BJ (cell line): ENCODE measurements at regions of chr2 and their contacts with region 1.

Region 1: GRCh38 chr2:69724540-69725159 is 17.3 kb upstream of the ANXA4 start:
- DNase-seq: no peak
- H3K4me3 ChIP-seq: peak overlapping the region; percentile 23; the same call in 1 of the 2 replicates
- H3K27me3 ChIP-seq: no peaks in the 10 kb centered on the region
- CTCF ChIP-seq: peak; percentile 87

Region 2: GRCh38 chr2:69565431-69565839 is 159.2 kb before region 1 on chr2:
- CTCF ChIA-PET with region 1: interaction called, 10 read pairs
- POLR2A ChIA-PET with region 1: no interaction called
- DNase-seq: no peak
- H3K4me3 ChIP-seq: no peak overlapping the region
- H3K27me3 ChIP-seq: no peaks in the 10 kb centered on the region
- CTCF ChIP-seq: peak; percentile 57

Region 3: DNA sequence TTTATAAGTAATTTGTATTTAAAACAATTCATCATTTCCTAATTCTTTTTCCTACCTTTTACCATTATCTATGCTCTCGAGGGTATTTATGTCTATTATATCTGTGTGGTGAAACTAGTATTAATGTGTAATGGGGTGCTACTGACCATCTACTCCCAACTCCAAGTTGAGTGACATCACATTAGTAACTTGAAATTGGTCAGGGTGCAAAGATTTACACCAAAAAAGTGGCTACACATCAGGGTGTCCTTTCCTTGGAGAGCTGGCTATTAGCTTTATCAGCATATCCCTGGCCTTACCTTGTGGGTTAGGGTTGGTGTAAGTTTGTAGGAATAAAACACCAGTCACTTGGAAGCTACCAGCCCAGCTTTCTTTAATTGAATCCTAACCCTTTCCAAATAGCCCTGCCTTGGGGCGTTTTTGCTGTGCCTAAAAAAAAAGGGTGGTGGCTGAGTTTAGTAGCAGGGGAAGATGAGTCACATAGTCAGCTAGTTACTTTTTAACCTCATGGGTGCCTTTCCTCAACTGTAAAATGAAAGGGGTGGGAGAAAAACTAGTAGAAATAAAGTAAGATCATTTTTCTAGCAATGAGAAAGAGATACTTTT is 31.3 kb after region 1 on chr2:
- CTCF ChIA-PET with region 1: interaction called, 11 read pairs
- POLR2A ChIA-PET with region 1: no interaction called
- DNase-seq: peak; percentile 82
- H3K4me3 ChIP-seq: no peak overlapping the region
- H3K27me3 ChIP-seq: no peaks in the 10 kb centered on the region
- CTCF ChIP-seq: no peak

Region 4: GRCh38 chr2:69810550-69810949 is 85.9 kb after region 1 on chr2:
- CTCF ChIA-PET with region 1: interaction called, 257 read pairs
- POLR2A ChIA-PET with region 1: no interaction called
- DNase-seq: no peak
- H3K4me3 ChIP-seq: no peak overlapping the region
- H3K27me3 ChIP-seq: no peaks in the 10 kb centered on the region
- CTCF ChIP-seq: no peak